Activated naive CD4-positive, alpha-beta T cell treated with anti-CD3 and anti-CD28 coated beads for 36 hours (primary cell): ENCODE measurements at regions of chr11 and their contacts with region 1.

Region 1: DNA sequence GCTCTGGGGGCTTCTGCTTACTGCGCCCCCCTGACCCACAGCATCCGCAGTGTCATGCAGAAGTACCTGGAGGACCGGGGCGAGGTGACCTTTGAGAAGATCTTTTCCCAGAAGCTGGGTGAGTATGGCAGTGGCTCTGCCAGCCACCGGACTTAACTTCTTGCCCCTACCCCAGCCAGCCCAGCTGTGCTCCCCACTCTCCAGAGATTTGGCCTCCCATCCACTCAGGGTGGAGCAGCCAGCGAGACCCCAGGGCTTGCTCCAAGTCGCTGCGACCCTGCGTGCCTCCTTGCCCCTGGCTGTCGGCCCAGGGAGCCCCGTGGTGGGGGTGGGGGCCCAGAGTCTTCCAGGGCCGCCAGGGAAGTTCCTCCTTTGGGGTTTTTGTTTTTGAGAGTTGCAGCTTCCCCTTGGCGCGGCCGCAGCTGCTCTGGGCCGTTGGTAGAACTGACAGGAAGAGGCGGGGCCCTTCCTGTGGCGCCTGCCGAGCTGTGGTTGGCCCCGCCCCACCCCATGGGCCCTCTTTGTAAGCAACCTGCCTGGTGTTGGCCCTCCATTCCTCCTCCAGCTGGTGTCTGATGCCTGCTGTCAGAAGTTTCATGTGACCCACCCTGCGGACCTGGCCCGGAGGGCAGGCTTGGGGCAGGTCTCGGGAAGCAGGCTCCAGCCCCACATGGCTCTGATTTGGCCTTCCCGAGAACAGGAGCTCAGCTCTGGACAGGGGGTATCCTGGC is 11.1 kb downstream of the GRK2 start:
- DNase-seq: peak; percentile 95
- H3K4me3 Mint-ChIP-seq: peak overlapping the region; percentile 73
- H3K27ac Mint-ChIP-seq: peak overlapping the region; percentile 99
- H3K4me1 Mint-ChIP-seq: peaks cover 69% of the 10 kb centered on the region
- H3K27me3 Mint-ChIP-seq: no peaks in the 10 kb centered on the region

Region 2: DNA sequence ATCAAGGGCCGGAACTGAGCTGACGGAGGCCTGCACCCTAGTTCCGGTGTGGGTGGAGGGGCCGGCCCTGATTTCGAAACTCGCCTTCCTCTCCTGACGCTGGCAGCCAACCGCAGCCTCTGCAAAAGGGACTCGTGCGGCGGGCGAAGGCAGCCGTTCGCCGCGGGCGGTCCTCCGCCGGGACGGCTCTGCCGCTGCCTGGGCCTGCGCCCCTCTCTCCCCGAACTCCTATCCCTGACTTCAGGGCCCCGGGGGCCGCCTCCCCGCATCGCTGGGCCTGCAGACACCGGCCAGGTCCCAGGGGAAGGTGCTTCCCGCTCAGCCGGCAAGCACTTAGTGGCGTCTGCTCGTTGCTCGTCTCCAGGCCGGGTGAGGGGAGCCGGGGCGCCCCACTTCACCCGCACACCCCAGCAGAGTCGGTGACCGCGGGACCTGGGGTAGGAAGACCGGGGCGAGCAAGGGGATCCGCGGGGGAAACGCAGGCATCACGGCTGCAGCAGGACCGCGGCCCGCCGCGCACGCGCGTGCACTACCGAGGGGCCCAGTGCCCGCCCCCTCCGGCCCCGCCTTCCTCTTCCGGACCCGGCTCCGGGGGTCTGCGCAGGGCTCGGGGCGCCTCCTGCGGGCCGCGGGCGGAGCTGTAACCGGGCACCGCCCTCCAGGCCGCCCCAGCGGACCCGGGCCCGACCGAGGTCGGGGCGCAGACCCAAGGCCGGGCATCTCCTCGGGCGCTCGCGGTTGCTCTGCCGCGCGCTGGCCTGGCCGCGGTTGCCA is 11.2 kb after region 1 on chr11:
- CTCF ChIA-PET with region 1: interaction called, 25 read pairs
- intact Hi-C with region 1: loop called (anchors 1 kb)
- DNase-seq: peak; percentile 95
- H3K4me3 Mint-ChIP-seq: peak overlapping the region; percentile 71
- H3K27ac Mint-ChIP-seq: peak overlapping the region; percentile 96
- H3K4me1 Mint-ChIP-seq: peaks cover 47% of the 10 kb centered on the region
- H3K27me3 Mint-ChIP-seq: no peaks in the 10 kb centered on the region